ENCODE measurements at regions of chr6 and their contacts with region 1.

Region 1: DNA sequence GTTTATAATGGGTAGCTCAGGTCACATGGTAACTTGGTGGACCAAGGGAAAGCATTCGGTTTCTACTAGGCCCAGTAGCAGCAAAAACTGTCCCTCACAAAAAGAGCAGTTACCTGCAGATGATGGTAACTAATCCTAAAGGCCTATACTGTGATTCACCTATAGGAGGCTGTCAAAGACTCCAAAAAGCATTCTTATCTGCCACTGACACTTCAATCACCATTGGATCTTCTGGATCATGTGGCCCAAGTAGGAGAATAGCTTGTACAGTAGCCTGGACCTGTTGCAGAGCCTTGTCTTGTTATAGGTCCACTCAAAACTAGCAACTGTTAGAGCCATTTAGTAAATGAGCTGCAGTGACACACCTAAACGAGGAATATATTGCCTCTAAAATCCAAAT is 23.2 kb upstream of the FILIP1 start:
- DNase-seq: no peak
- ATAC-seq: no peak

Region 2: GRCh38 chr6:75299801-75300530 is 216.8 kb before region 1 on chr6:
- intact Hi-C with region 1: loop called (anchors 10 kb)
- DNase-seq: no peak
- ATAC-seq: no peak